ENCODE measurements at regions of chr7 and their contacts with region 1.

Region 1: GRCh38 chr7:148747275-148747674 is 48.6 kb downstream of the CUL1 start:
- DNase-seq: no peak
- ATAC-seq: peak; percentile 36
- H3K4me3 Mint-ChIP-seq: no peak overlapping the region
- H3K27ac Mint-ChIP-seq: peak overlapping the region; percentile 31
- H3K4me1 Mint-ChIP-seq: peaks cover 36% of the 10 kb centered on the region
- H3K27me3 Mint-ChIP-seq: no peaks in the 10 kb centered on the region

Region 2: DNA sequence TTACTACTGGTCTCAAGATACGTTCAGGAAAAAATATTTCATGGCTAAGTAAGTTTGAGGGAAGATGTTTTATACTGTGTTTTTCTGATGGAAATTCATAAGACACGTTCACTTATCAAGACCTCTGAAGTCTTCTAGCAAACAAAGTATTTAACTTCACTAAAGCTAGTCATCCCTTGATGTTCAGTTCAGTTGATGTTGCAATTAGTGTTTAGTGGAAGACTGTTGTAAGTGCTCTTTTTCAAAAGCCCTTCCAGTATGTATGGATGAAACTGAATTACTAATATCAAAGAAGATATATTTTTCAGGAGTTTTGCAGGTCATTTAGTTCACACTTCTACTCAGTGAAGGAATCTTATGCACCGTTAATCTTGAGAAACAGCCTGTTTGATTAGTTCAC is 23.4 kb before region 1 on chr7:
- CTCF ChIA-PET with region 1: interaction called, 10 read pairs
- POLR2A ChIA-PET with region 1: no interaction called
- intact Hi-C with region 1: no loop called
- DNase-seq: no peak
- ATAC-seq: no peak
- H3K4me3 Mint-ChIP-seq: no peak overlapping the region
- H3K27ac Mint-ChIP-seq: no peak overlapping the region
- H3K4me1 Mint-ChIP-seq: peaks cover 86% of the 10 kb centered on the region
- H3K27me3 Mint-ChIP-seq: no peaks in the 10 kb centered on the region

Measured in activated CD4-positive, alpha-beta T cell treated with anti-CD3 and anti-CD28 coated beads for 36 hours (primary cell).